ENCODE measurements at regions of chr7 and their contacts with region 1.

Region 1: GRCh38 chr7:108525985-108526767 is at the start of gene PNPLA8:
- DNase-seq: peak; percentile 97
- H3K4me3 ChIP-seq: peak within 1 kb of the TSS; percentile 88
- H3K27ac ChIP-seq: peak within 1 kb of the TSS; percentile 99
- H3K27me3 ChIP-seq: no peaks in the 10 kb centered on the region
- CTCF ChIP-seq: no peak
- polyA plus RNA-seq, gene PNPLA8: 18.7 and 26.7 TPM in 2 replicates

Region 2: GRCh38 chr7:108246227-108246837 is 279.8 kb before region 1 on chr7:
- CTCF ChIA-PET with region 1: no interaction called
- POLR2A ChIA-PET with region 1: no interaction called
- DNase-seq: peak; percentile 70
- H3K4me3 ChIP-seq: no peak overlapping the region
- H3K27ac ChIP-seq: peak overlapping the region; percentile 82
- H3K27me3 ChIP-seq: no peaks in the 10 kb centered on the region
- CTCF ChIP-seq: no peak

Region 3: DNA sequence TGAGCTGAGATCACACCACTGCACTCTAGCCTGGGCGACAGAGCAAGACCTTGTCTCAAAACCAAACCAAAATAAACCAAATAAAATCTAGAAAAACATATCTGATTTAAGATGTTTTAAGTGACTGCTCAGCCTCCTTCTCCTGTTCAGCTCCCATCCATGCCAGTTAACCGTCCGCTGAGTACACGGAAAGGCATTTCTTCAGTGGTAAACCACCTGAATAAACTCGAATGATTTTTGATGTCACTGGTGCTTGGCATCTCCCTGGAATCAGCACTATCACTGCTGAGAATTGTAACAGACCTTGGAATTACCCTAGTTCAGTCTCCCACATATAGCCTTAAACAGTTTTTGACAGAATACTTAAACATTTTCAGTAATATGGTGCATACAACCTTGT is 45.9 kb before region 1 on chr7:
- CTCF ChIA-PET with region 1: no interaction called
- POLR2A ChIA-PET with region 1: no interaction called
- DNase-seq: no peak
- H3K4me3 ChIP-seq: no peak overlapping the region
- H3K27ac ChIP-seq: no peak overlapping the region
- H3K27me3 ChIP-seq: no peaks in the 10 kb centered on the region
- CTCF ChIP-seq: no peak

Region 4: GRCh38 chr7:108557191-108557590 is 31.0 kb after region 1 on chr7:
- CTCF ChIA-PET with region 1: no interaction called
- POLR2A ChIA-PET with region 1: no interaction called
- DNase-seq: no peak
- H3K4me3 ChIP-seq: no peak overlapping the region
- H3K27ac ChIP-seq: no peak overlapping the region
- H3K27me3 ChIP-seq: no peaks in the 10 kb centered on the region
- CTCF ChIP-seq: no peak

Region 5: GRCh38 chr7:108569381-108570145 is 43.4 kb after region 1 on chr7 and contains the starts of genes DNAJB9 and THAP5:
- CTCF ChIA-PET with region 1: no interaction called
- POLR2A ChIA-PET with region 1: interaction called, 21 read pairs
- DNase-seq: peak; percentile 98
- H3K4me3 ChIP-seq: peak within 1 kb of the TSS; percentile 99
- H3K27ac ChIP-seq: peak within 1 kb of the TSS; percentile 96
- H3K27me3 ChIP-seq: no peaks in the 10 kb centered on the region
- CTCF ChIP-seq: 0 out of 2 replicates have a peak, but pooled peaks have one; percentile 8
- polyA plus RNA-seq, gene DNAJB9: 7.8 and 9.3 TPM in 2 replicates
- polyA plus RNA-seq, gene THAP5: 8.4 and 11.4 TPM in 2 replicates